ENCODE measurements at regions of chrX and their contacts with region 1.

Region 1: GRCh38 chrX:44872817-44873414 is at the start of gene KDM6A:
- DNase-seq: peak; percentile 98 to 99
- H3K4me3 ChIP-seq: peak within 1 kb of the TSS; percentile 89 to 100
- H3K27ac ChIP-seq: peak within 1 kb of the TSS; percentile 98 to 100
- H3K4me1 ChIP-seq: peaks cover 2 to 29% of the 10 kb centered on the region in 2 donors
- H3K27me3 ChIP-seq: no peaks in the 10 kb centered on the region
- CTCF ChIP-seq: no peak
- total RNA-seq, gene KDM6A: 16.3 TPM

Region 2: DNA sequence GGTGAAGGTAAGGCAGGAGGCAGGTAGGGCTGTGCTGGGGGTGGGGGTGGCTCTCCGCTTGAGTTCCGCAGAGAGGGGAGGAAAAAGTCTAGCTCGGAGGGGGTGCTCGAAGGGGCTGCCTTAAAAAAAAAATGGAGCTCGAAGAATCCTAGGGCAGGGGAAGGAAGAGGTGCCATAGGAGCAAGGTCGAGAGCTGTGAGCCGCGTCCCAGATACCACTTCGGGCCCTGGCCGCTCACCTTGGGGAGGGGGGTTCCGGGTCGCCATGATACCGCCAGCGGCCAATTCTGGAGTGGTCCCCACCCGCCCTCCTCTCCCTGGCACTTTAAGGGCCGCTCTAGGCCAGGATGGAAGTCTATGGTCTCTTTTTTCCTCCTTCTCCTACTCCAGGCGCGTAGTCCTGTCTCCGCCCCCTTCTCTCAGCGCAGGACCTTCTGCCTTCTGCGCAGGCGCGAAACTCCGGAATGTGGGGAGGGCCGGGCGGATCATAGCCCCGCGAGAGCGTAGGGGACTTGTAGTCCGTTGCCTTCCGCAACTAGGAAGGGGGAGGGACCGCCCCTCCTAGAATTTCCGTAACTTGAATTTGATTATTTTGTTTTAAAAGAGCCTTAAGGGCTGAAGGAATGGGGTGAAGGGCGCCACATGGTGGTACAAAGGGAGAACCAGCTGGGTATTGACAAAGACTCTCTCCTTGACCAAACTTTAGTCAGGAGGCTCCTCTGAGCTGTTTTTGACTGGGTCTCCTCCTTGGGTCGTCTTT is 330.2 kb before region 1 on chrX and contains the start of gene FUNDC1:
- intact Hi-C with region 1: loop called (anchors 5 kb)
- DNase-seq: peak; percentile 85 to 96
- H3K4me3 ChIP-seq: peak within 1 kb of the TSS; percentile 60 to 74
- H3K27ac ChIP-seq: peak within 1 kb of the TSS; percentile 62 to 63
- H3K4me1 ChIP-seq: no peaks in the 10 kb centered on the region
- H3K27me3 ChIP-seq: no peaks in the 10 kb centered on the region
- CTCF ChIP-seq: peak in 1 of 3 experiments; percentile 42
- total RNA-seq, gene FUNDC1: 2.4 TPM

Region 3: GRCh38 chrX:45070116-45071007 is 197.4 kb after region 1 on chrX:
- intact Hi-C with region 1: loop called (anchors 2 kb)
- DNase-seq: no peak
- H3K4me3 ChIP-seq: no peak overlapping the region
- H3K27ac ChIP-seq: no peak overlapping the region
- H3K4me1 ChIP-seq: peaks cover 0 to 4% of the 10 kb centered on the region in 2 donors
- H3K27me3 ChIP-seq: no peaks in the 10 kb centered on the region
- CTCF ChIP-seq: peak; percentile 31 to 66 (median 50)

Region 4: GRCh38 chrX:46545111-46546005 is 1672.4 kb after region 1 on chrX and contains the start of gene ZNF674:
- intact Hi-C with region 1: loop called (anchors 10 kb)
- DNase-seq: peak; percentile 60 to 94
- H3K4me3 ChIP-seq: peak within 1 kb of the TSS; percentile 56 to 80
- H3K27ac ChIP-seq: peak within 1 kb of the TSS; percentile 75 to 86
- H3K4me1 ChIP-seq: peaks cover 0 to 9% of the 10 kb centered on the region in 2 donors
- H3K27me3 ChIP-seq: no peaks in the 10 kb centered on the region
- CTCF ChIP-seq: peak; percentile 12 to 31 (median 29)
- total RNA-seq, gene ZNF674: 2.3 TPM